ENCODE measurements at regions of chr3 and their contacts with region 1.

Region 1: DNA sequence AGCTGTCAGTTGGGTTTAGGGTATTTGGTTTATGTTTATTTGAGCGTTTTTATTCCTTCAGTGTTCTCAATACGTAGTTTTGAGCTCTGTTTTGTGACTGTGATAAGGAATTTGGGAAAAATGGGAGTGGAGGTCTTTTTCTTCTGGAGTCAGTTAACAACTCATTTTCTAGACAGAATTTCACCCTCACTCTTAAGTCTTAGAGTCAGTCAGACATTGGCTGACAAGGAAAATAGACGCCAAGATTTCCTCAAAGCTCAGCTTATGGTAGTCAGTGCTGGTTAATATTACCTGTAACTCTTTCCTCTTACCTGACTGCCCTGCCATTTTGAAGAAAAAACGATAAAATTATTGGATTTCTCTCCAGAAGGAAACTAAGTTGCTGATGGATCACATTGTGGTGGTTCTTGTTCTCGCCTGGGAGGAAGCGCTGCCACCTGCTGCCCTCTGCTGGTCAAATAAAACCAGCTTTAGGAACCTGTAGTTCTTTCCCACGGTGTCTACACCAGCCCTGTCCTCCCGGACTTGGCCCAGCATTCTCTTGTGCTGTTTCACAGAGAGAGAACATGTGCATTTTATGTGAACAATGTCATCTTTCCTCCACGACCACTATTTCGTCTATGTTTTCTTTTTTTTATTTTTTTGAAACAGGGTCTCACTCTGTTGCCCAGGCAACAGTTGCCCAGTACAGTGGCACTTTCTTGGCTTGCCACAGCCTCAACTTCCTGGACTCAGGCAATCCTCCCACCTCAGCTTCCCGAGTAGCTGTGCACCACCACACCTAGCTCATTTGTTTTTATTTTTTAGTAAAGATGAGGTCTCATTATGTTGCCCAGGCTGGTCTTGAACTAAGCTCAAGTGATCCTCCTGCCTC is 41.4 kb upstream of the UMPS start:
- DNase-seq: peak; percentile 87

Region 2: DNA sequence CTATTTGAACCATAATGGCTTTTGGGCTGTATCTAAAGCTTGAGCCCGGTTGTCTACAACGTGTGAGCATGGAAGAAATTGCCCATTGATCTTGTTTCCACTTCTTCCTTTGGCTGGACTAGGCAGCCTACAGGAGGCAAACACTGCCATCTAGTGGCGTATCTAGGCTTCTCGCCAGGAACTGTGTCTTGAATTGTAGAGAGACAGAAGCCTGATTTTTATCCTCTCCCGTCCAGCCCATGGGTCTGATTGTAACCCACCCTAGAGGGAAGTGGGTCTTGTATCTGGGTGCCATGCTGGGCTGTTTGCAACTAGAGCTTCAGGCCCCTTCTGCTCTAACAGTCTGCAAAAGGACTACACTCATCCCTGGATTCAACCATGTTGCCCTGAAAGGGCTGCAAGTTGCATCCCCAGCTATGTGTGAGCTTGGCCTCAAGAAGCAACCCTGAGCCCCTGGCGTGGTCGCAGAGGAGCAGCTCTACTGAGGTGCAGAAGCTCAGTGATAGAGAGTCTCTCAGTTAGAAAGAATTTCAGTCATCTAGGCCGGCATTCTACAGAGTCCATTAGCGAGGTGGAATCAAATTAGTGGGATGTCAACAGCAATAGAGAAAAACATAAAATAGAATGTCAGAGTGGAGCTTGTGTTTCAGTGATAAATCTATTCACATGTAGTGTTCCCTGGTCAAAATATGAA is 128.8 kb before region 1 on chr3:
- CTCF ChIA-PET with region 1: interaction called, 56 read pairs
- POLR2A ChIA-PET with region 1: interaction called, 5 read pairs
- DNase-seq: peak; percentile 77